ENCODE measurements at regions of chr1 and their contacts with region 1.

Region 1: DNA sequence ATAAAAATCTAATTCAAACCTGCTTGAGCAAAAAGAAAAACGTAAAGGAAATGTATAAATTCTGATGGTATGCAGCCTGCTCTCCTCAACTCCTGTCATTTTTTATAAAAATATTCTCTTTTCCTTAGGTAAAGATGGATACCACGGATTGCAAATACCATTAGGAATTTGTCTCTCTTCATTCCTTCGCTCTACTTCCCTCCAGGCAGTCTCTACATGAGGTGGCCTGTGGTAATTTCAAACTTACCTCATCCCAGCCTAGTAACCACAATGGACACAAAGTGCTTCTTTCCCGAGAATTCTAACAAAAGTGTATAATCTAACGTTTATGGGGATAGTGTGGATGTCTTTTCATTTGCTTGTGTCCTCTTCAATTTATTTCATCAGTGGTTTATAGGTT is 239.5 kb upstream of the LRRC7 start:
- DNase-seq: no peak
- H3K4me3 Mint-ChIP-seq: no peak overlapping the region
- H3K27ac Mint-ChIP-seq: no peak overlapping the region
- H3K4me1 Mint-ChIP-seq: no peaks in the 10 kb centered on the region
- H3K27me3 Mint-ChIP-seq: no peaks in the 10 kb centered on the region
- CTCF ChIP-seq: no peak

Region 2: DNA sequence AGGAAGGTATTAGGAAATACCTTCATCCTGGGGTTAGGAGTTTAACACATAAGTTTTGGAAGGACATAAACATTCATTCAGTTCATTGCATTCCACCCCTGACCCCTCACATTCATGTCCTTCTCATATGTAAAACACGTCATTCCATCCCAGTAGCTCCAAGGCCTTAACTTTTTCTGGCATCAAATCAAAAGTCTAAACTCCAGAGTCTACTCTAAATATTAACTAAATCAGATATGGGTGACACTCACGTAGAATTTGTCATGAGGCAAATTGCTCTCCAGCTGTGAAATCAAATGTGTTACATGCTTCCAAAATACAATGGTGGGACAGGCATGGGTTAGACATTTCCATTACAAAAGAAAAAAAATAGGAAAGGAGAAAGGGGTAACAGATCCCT is 58.7 kb before region 1 on chr1:
- CTCF ChIA-PET with region 1: no interaction called
- intact Hi-C with region 1: no loop called
- DNase-seq: peak; percentile 5
- H3K4me3 Mint-ChIP-seq: no peak overlapping the region
- H3K27ac Mint-ChIP-seq: peak overlapping the region; percentile 35
- H3K4me1 Mint-ChIP-seq: peaks cover 22% of the 10 kb centered on the region
- H3K27me3 Mint-ChIP-seq: no peaks in the 10 kb centered on the region
- CTCF ChIP-seq: no peak

Region 3: DNA sequence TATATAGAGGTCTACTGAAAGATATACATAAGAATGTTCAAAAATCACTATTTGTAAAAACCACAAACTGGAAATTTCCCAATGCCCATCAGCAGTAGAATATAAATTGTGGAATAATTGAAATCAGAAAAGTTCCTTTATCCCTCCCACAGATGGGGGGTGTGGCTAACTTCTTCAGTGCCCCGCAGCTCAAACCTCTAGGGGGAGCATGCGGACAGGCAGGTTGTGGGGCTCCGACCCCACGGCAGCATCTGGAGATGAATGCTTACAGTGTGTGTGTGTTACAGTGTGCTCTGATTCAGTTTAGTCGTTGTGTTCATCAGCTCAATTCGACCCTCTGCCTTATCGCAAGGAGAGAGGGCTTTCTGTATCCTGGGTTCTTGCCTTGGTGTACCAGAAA is 22.6 kb before region 1 on chr1:
- CTCF ChIA-PET with region 1: no interaction called
- intact Hi-C with region 1: no loop called
- DNase-seq: no peak
- H3K4me3 Mint-ChIP-seq: no peak overlapping the region
- H3K27ac Mint-ChIP-seq: no peak overlapping the region
- H3K4me1 Mint-ChIP-seq: no peaks in the 10 kb centered on the region
- H3K27me3 Mint-ChIP-seq: no peaks in the 10 kb centered on the region
- CTCF ChIP-seq: no peak

Region 4: GRCh38 chr1:69409731-69410456 is 81.7 kb after region 1 on chr1:
- CTCF ChIA-PET with region 1: no interaction called
- intact Hi-C with region 1: no loop called
- DNase-seq: no peak
- H3K4me3 Mint-ChIP-seq: no peak overlapping the region
- H3K27ac Mint-ChIP-seq: no peak overlapping the region
- H3K4me1 Mint-ChIP-seq: no peaks in the 10 kb centered on the region
- H3K27me3 Mint-ChIP-seq: no peaks in the 10 kb centered on the region
- CTCF ChIP-seq: no peak

Region 5: DNA sequence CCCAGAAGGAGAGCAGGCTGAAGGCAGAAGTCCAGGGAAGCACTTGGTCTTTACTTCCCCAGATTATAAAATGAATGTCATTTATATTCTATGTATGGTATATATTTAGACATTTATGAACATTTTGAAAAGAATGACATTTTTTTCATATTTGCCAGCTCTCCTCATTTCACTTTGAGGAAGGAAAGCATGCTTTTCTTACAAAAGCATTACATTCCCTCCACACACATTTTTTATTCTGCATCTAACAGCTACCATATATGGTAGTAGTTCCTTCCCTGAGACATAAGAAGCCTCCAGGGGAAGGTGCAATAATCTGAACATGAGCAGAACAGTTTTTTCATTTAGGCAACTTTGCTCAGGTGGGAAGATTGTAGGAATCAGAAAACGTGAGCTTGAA is 333.5 kb after region 1 on chr1:
- CTCF ChIA-PET with region 1: interaction called, 10 read pairs
- intact Hi-C with region 1: no loop called
- DNase-seq: no peak
- H3K4me3 Mint-ChIP-seq: no peak overlapping the region
- H3K27ac Mint-ChIP-seq: no peak overlapping the region
- H3K4me1 Mint-ChIP-seq: no peaks in the 10 kb centered on the region
- H3K27me3 Mint-ChIP-seq: no peaks in the 10 kb centered on the region
- CTCF ChIP-seq: no peak